HCT116 (cell line): ENCODE measurements at regions of chr12 and their contacts with region 1.

Region 1: GRCh38 chr12:1117970-1118563 is 127.0 kb downstream of the ERC1 start:
- DNase-seq: peak; percentile 59
- ATAC-seq: peak; percentile 59
- H3K4me3 ChIP-seq: no peak overlapping the region
- H3K27ac ChIP-seq: no peak overlapping the region
- H3K4me1 ChIP-seq: peaks cover 17 to 23% of the 10 kb centered on the region in 2 experiments
- H3K27me3 ChIP-seq: no peaks in the 10 kb centered on the region
- CTCF ChIP-seq: peak; percentile 71 to 94 (median 81)
- POLR2A ChIP-seq: no peak
- RAD21 ChIP-seq: peak; percentile 92

Region 2: DNA sequence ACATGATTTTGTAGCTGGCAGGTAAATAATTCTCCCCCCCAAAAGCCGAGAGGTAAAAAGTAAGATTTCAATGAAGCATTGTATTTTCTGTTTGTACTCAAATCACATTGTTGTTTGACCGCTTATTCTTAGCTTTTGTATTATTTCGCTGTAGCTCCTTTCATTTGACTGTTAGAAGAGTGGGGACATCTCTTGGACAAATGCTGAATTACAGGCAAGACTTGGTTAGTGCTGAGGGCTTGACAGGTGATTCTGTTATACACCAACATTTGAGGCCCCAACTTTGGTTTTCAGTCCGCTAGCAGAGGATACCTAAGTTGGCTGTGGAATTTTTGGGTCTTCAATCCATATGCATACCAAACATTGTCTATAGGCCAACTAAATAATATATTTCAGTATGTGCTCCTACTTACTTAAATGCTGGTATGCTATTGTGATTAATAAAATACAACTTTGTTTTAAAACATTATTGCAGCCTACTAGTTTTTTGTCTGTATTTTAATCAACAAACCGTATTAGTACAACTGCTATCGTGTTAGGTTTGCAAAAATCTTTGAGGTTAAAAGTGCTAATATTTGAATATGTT is 24.8 kb before region 1 on chr12:
- CTCF ChIA-PET with region 1: interaction called, 20 read pairs
- POLR2A ChIA-PET with region 1: no interaction called
- RAD21 ChIA-PET with region 1: no interaction called
- intact Hi-C with region 1: no loop called
- DNase-seq: peak; percentile 53
- ATAC-seq: peak; percentile 85
- H3K4me3 ChIP-seq: no peak overlapping the region
- H3K27ac ChIP-seq: no peak overlapping the region
- H3K4me1 ChIP-seq: no peaks in the 10 kb centered on the region
- H3K27me3 ChIP-seq: no peaks in the 10 kb centered on the region
- CTCF ChIP-seq: peak; percentile 53 to 76 (median 74); a peak in 5 of 6 replicates
- POLR2A ChIP-seq: no peak
- RAD21 ChIP-seq: peak; percentile 73

Region 3: GRCh38 chr12:1246637-1247036 is 128.6 kb after region 1 on chr12:
- CTCF ChIA-PET with region 1: no interaction called
- POLR2A ChIA-PET with region 1: no interaction called
- RAD21 ChIA-PET with region 1: no interaction called
- intact Hi-C with region 1: no loop called
- DNase-seq: no peak
- ATAC-seq: no peak
- H3K4me3 ChIP-seq: no peak overlapping the region
- H3K27ac ChIP-seq: no peak overlapping the region
- H3K4me1 ChIP-seq: peaks cover 0 to 5% of the 10 kb centered on the region in 2 experiments; a peak in 1 of 4 replicates
- H3K27me3 ChIP-seq: no peaks in the 10 kb centered on the region
- CTCF ChIP-seq: no peak
- POLR2A ChIP-seq: no peak
- RAD21 ChIP-seq: no peak

Region 4: GRCh38 chr12:1328391-1328790 is 210.3 kb after region 1 on chr12:
- CTCF ChIA-PET with region 1: no interaction called
- POLR2A ChIA-PET with region 1: no interaction called
- RAD21 ChIA-PET with region 1: no interaction called
- intact Hi-C with region 1: no loop called
- DNase-seq: no peak
- ATAC-seq: no peak
- H3K4me3 ChIP-seq: no peak overlapping the region
- H3K27ac ChIP-seq: no peak overlapping the region
- H3K4me1 ChIP-seq: peaks cover 5 to 6% of the 10 kb centered on the region in 2 experiments; a peak in 2 of 4 replicates
- H3K27me3 ChIP-seq: no peaks in the 10 kb centered on the region
- CTCF ChIP-seq: no peak
- POLR2A ChIP-seq: no peak
- RAD21 ChIP-seq: no peak

Region 5: GRCh38 chr12:1544996-1545700 is 427.1 kb after region 1 on chr12:
- CTCF ChIA-PET with region 1: interaction called, 21 read pairs
- POLR2A ChIA-PET with region 1: no interaction called
- RAD21 ChIA-PET with region 1: interaction called, 3 to 9 read pairs
- intact Hi-C with region 1: loop called (anchors 1 kb)
- DNase-seq: peak; percentile 4
- ATAC-seq: no peak
- H3K4me3 ChIP-seq: no peak overlapping the region
- H3K27ac ChIP-seq: no peak overlapping the region
- H3K4me1 ChIP-seq: peaks cover 15 to 19% of the 10 kb centered on the region in 2 experiments
- H3K27me3 ChIP-seq: no peaks in the 10 kb centered on the region; the same call in 1 of the 2 replicates
- CTCF ChIP-seq: peak; percentile 37 to 45 (median 43); a peak in 5 of 6 replicates
- POLR2A ChIP-seq: no peak
- RAD21 ChIP-seq: peak; percentile 70

Region 6: GRCh38 chr12:1583421-1584078 is 465.5 kb after region 1 on chr12:
- CTCF ChIA-PET with region 1: interaction called, 180 read pairs
- POLR2A ChIA-PET with region 1: interaction called, 8 read pairs
- RAD21 ChIA-PET with region 1: interaction called, 20 to 23 read pairs
- intact Hi-C with region 1: loop called (anchors 1 kb)
- DNase-seq: peak; percentile 75
- ATAC-seq: peak; percentile 84
- H3K4me3 ChIP-seq: no peak overlapping the region
- H3K27ac ChIP-seq: no peak overlapping the region
- H3K4me1 ChIP-seq: peaks cover 2 to 4% of the 10 kb centered on the region in 2 experiments; a peak in 1 of 4 replicates
- H3K27me3 ChIP-seq: no peaks in the 10 kb centered on the region
- CTCF ChIP-seq: peak; percentile 75 to 91 (median 77)
- POLR2A ChIP-seq: no peak
- RAD21 ChIP-seq: peak; percentile 92

Region 7: DNA sequence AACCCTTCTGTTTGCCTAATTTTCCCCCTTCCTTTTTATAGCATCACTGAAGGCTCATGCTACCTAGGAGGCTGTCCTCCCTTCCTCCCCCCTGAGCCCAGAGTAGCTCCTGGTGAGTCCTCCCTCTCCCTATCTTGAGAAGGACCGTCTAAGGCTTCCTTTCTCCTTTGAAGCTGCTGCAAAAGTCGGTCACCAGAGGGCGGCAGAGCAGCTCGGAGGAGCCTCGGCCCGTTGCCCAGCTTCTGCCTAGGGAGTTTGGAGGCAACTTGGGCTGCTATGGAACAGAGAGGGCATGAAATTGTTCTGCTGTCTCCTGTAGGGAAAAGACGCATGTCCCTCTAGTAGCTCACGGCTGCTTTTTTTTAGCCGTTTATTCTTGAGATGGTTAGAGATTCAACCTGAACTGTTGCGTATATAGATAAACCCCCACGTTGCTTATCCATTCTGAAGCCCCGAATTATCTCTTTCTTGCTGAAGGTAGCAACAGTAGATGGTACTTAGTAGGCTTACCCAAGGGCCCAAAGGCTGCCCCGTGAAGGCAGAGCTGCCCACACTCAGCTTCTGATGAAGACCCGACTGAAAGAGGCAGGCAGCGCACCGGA is 516.6 kb after region 1 on chr12:
- CTCF ChIA-PET with region 1: interaction called, 14 read pairs
- POLR2A ChIA-PET with region 1: no interaction called
- RAD21 ChIA-PET with region 1: no interaction called
- intact Hi-C with region 1: no loop called
- DNase-seq: peak; percentile 63
- ATAC-seq: peak; percentile 81
- H3K4me3 ChIP-seq: no peak overlapping the region
- H3K27ac ChIP-seq: no peak overlapping the region
- H3K4me1 ChIP-seq: peaks cover 0 to 15% of the 10 kb centered on the region in 2 experiments; a peak in 3 of 4 replicates
- H3K27me3 ChIP-seq: no peaks in the 10 kb centered on the region
- CTCF ChIP-seq: peak; percentile 78 to 93 (median 90)
- POLR2A ChIP-seq: no peak
- RAD21 ChIP-seq: peak; percentile 85